ENCODE measurements at regions of chr13 and their contacts with region 1.

Region 1: DNA sequence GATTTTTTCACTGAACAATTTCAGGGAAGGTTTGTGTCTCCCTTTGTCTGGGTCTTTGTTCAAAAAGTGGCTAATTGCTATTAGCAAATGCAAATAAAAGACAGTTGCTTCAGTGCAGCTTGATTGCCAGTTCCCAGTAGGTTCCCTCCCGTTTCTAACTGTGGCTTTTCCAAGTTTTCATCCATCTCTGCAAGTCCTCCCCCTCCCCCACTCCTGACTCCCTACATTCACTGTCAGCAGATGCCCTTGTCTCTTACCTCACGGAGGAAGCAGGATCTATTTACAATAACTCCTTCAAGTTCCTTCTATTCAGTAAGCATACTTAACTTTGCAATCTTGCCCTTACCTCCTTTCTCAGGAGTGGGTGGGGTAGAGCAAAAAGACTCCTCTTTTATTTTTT is 55.4 kb upstream of the SCEL start:
- DNase-seq: no peak
- H3K4me3 Mint-ChIP-seq: no peak overlapping the region
- H3K27ac Mint-ChIP-seq: no peak overlapping the region
- H3K4me1 Mint-ChIP-seq: peaks cover 16% of the 10 kb centered on the region
- H3K27me3 Mint-ChIP-seq: no peaks in the 10 kb centered on the region

Region 2: DNA sequence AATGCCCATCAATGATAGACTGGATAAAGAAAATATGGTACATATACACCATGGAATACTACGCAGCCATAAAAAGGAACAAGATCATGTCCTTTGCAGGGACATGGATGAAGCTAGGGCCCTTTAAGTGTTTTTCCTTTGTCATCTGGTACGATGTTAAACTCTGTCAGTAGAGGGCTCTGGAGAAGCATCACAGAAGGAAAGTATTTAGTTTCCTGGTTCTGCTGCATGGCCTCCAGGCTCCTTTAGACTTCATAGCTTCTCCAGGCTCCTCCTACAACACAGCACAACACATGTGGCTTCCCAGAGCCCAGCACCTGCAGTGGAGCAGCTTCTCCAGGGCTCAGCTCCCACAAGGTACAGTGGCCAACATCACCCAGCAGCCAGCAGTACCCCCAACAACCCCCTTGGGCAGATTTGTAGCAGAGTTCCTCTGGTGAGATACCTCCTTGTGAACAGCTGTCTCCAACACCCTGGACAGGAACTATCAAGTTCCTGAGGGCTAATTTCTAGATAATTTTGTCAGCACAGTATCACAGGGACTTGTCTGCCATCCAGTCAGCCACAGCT is 657.3 kb before region 1 on chr13:
- CTCF ChIA-PET with region 1: no interaction called
- intact Hi-C with region 1: loop called (anchors 10 kb)
- DNase-seq: peak; percentile 19
- H3K4me3 Mint-ChIP-seq: no peak overlapping the region
- H3K27ac Mint-ChIP-seq: no peak overlapping the region
- H3K4me1 Mint-ChIP-seq: peaks cover 2% of the 10 kb centered on the region
- H3K27me3 Mint-ChIP-seq: no peaks in the 10 kb centered on the region

Region 3: DNA sequence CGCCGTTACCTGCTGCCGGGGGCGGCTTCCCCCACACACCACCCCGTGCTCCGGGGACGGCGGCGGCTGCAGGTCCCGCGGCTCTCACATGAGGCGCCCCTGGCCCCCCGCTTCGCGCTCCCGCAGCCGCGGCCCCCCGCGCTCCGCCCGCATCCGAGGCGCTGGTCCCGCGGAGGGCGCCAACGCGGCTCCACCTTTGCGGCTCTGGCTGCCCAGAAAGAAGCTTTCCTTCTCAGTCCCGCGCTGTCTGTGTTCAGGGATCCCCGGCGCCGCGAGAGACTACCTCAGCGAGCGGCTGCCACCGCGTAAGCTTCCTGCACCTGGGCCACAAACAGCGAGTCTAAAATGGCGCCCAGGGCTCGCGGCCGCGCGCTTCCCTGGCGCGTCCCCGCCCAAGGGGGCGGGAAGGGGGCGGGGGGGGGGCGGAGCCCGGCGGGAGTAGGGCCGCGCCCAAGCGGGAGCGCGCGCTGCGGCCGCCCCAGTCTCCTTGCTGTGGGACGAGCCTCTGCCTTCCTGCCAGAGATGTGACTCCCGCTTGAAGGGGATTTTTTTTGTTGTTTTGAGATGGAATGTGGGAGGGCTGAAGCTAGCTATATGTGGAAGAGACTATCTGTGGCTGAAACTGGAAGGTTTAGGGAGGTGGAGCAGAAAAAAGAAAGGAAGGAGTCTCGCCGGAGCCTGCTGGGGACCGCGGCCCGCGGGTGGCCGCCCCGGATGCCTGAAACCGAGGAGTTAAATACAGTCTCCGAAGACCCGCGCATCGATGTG is 453.1 kb before region 1 on chr13 and contains the start of gene FBXL3:
- CTCF ChIA-PET with region 1: interaction called, 4 read pairs
- intact Hi-C with region 1: loop called (anchors 1 kb)
- DNase-seq: peak; percentile 83
- H3K4me3 Mint-ChIP-seq: peak within 1 kb of the TSS; percentile 91
- H3K27ac Mint-ChIP-seq: peak within 1 kb of the TSS; percentile 93
- H3K4me1 Mint-ChIP-seq: peaks cover 42% of the 10 kb centered on the region
- H3K27me3 Mint-ChIP-seq: no peaks in the 10 kb centered on the region
- total RNA-seq, gene FBXL3: 27.1 to 27.4 TPM

Region 4: GRCh38 chr13:77274126-77274525 is 205.9 kb before region 1 on chr13:
- CTCF ChIA-PET with region 1: interaction called, 4 read pairs
- intact Hi-C with region 1: loop called (anchors 1 kb)
- DNase-seq: no peak
- H3K4me3 Mint-ChIP-seq: no peak overlapping the region
- H3K27ac Mint-ChIP-seq: no peak overlapping the region
- H3K4me1 Mint-ChIP-seq: peaks cover 14% of the 10 kb centered on the region
- H3K27me3 Mint-ChIP-seq: no peaks in the 10 kb centered on the region

Region 5: DNA sequence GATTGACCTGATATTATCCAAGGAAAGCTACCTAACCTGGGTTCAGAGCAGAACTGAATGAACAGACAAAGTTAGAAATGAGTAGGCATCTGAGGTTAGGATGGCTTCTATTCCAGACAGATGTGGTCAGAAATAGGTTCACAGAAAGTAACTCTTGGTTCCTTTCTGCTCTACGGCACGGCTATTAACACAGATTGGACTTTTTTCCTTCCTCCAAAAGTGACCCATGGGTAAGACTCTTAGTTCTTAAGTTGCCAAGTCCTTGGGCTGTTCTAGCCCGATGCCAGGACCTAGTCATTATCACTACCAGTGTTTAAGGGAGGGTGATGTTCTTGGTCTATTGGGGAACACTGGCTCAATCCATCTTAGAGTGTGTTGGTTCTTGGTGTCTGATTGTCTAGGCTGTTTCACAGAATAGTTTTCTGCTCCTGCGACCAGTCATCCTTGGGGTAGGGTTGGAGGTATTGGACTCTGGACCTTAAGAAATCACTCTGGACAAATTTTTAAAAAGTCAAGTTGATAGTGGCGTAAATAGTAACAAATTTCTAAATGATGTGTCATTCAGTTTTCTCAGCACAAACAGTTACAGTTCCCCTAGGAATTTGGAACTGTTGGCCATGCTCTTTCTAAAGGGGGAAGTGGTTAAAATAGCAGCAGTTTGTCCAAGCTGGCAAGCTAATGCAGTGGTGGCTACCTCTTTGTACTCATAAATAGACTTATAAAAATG is 93.0 kb before region 1 on chr13:
- CTCF ChIA-PET with region 1: interaction called, 6 read pairs
- intact Hi-C with region 1: loop called (anchors 5 kb)
- DNase-seq: no peak
- H3K4me3 Mint-ChIP-seq: no peak overlapping the region
- H3K27ac Mint-ChIP-seq: no peak overlapping the region
- H3K4me1 Mint-ChIP-seq: peaks cover 1% of the 10 kb centered on the region
- H3K27me3 Mint-ChIP-seq: no peaks in the 10 kb centered on the region

Region 6: DNA sequence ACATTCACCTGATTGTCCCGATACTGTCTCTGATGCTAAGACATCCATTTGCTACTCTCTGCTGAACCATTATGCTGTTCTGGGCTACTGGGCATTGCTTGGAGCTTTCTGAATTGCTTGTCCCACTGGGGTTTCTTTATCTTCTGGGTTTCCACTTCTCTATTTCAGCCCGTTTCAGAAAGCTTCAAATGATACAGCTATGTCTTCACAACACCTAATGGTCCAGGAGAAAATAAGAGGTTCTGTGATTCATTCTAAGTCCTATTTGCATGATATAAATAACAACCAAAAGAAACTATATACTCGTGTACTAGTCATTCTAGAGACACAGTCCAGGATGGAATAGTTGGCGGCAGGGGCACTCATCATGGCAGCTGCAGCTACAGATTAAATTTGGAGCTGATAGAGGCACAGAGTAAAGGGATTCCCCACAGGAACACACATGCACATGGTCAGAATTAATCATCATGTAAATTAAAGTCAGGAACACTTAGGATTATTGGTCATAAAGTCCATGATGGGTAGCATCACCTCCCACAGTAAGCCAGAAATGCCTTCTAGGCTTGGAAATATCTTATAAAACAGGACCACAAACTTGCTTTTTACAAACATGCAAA is 22.1 kb after region 1 on chr13:
- CTCF ChIA-PET with region 1: interaction called, 13 read pairs
- intact Hi-C with region 1: no loop called
- DNase-seq: no peak
- H3K4me3 Mint-ChIP-seq: no peak overlapping the region
- H3K27ac Mint-ChIP-seq: no peak overlapping the region
- H3K4me1 Mint-ChIP-seq: peaks cover 4% of the 10 kb centered on the region
- H3K27me3 Mint-ChIP-seq: peaks cover 3% of the 10 kb centered on the region

Region 7: GRCh38 chr13:77533875-77534788 is 54.1 kb after region 1 on chr13:
- CTCF ChIA-PET with region 1: no interaction called
- intact Hi-C with region 1: no loop called
- DNase-seq: no peak
- H3K4me3 Mint-ChIP-seq: no peak overlapping the region
- H3K27ac Mint-ChIP-seq: no peak overlapping the region
- H3K4me1 Mint-ChIP-seq: no peaks in the 10 kb centered on the region
- H3K27me3 Mint-ChIP-seq: no peaks in the 10 kb centered on the region

Region 8: DNA sequence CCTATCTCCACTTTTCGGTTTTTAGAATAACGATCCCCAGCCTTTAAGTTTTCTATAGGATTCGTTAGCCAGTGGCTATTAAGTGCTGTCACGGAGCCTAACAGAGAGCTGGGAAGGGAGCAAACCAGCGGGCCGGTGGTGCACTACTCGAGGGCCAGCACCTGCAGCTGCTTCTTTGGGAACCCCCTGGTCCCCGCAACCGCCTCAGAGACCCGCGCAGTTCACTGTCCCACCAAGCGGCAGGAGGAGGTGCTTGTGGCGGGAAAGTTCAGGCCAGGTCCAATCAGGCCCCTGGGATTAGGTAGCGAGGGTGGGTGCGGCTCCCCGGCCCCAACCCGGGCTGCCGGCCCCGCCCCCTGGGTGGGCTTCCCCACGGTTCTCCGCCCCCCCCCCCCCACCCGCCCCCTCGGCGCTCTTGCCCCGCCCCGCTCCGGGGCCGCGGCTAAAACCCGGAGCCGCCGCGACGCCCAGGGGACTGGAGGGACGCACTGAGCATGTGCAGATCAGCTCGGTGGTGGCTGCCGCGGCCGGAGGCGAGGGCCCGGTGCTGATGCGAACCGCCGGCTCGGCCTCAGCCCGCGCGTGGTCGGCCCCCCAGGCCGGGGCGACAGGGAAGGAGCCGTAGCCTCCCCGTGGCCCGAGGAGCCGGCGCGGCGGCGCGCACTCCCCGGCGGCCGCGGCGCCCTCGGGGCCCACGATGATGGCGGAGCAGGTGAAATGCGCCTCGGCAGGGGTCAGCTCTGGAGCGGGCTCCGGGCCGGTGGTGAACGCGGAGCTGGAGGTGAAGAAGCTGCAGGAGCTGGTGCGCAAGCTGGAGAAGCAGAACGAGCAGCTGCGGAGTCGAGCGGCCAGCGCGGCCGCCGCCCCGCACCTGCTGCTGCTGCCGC is 217.4 kb after region 1 on chr13 and contains the start of gene SLAIN1:
- CTCF ChIA-PET with region 1: interaction called, 9 read pairs
- intact Hi-C with region 1: loop called (anchors 2 kb)
- DNase-seq: peak; percentile 79
- H3K4me3 Mint-ChIP-seq: peak within 1 kb of the TSS; percentile 96
- H3K27ac Mint-ChIP-seq: peak within 1 kb of the TSS; percentile 59
- H3K4me1 Mint-ChIP-seq: peaks cover 30% of the 10 kb centered on the region
- H3K27me3 Mint-ChIP-seq: no peaks in the 10 kb centered on the region
- total RNA-seq, gene SLAIN1: 18.0 to 21.7 TPM